Activated B cell treated with CpG ODN at 0.5 μM for 24 hours (primary cell): ENCODE measurements at regions of chr5 and their contacts with region 1.

Region 1: DNA sequence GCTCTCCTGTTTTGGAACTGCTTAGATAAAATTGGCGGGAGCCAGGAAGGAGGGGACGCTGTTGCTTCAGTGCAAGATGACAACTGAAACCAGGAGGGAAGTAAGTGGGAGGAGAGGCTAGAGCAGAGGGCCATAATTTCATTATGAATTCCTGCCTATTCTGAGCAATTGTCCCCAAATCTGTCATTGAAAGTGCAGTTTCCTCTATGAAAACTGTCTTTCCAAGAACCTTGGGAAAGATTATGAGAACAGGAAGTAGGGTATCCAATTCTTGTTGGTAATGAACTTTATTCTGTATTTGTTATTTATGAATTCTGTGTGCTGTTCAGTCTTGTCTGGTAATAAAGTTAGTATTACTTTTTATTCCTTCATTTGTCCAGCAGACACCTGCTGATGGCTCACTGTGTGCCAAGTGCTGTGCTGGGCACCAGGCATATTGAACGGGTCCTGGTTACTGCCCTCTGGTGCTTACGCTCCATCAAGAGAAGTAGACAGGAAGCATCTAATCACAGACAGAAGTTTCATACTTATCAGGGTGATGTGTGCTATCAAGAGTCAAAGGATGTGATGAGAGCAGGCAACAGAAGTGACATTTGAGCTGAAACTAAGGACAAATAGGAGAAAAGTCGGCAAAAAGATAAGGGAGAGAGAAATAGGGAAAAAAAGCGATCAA is 153.2 kb downstream of the FGF1 start:
- DNase-seq: no peak
- ATAC-seq: no peak
- H3K4me3 Mint-ChIP-seq: no peak overlapping the region
- H3K27ac Mint-ChIP-seq: no peak overlapping the region
- H3K4me1 Mint-ChIP-seq: peaks cover 6% of the 10 kb centered on the region
- H3K27me3 Mint-ChIP-seq: peaks cover 3% of the 10 kb centered on the region
- CTCF ChIP-seq: no peak

Region 2: DNA sequence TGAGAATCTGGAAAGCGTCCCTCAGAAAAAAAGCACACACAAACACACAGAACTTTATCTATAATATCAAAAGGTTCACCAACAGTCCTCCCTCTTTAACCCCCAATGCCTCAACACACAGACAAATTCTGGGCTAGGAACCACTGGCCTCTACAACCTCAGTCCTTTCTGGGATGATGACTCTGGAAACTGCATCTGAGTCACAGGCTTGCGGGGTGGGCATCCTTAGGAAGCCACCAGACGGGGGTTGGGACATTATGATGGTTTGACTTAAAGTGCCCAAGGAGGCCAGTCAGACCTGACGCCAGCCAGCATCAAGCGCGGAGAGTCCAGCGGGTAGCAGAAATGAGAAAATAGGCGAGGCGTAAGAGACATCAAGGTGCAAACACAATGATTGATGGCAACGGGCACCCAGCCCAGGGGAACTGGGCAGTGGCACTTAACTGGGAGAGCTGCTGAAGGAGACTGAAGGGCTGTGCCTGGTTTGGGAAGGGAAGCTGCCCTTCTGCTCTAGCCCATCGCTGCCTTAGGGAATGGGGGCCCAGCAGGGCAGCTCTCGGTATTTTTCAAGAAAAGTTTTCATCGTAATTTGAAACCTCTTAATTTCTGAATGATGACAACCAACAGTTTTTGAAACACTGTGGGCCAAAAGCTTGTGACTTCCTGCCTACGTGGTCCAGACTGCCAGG is 228.5 kb before region 1 on chr5:
- CTCF ChIA-PET with region 1: no interaction called
- POLR2A ChIA-PET with region 1: interaction called, 14 read pairs
- intact Hi-C with region 1: no loop called
- DNase-seq: no peak
- ATAC-seq: no peak
- H3K4me3 Mint-ChIP-seq: no peak overlapping the region
- H3K27ac Mint-ChIP-seq: no peak overlapping the region
- H3K4me1 Mint-ChIP-seq: no peaks in the 10 kb centered on the region
- H3K27me3 Mint-ChIP-seq: peaks cover 3% of the 10 kb centered on the region
- CTCF ChIP-seq: no peak

Region 3: GRCh38 chr5:142520886-142521285 is 11.8 kb before region 1 on chr5:
- CTCF ChIA-PET with region 1: no interaction called
- POLR2A ChIA-PET with region 1: no interaction called
- intact Hi-C with region 1: no loop called
- DNase-seq: no peak
- ATAC-seq: no peak
- H3K4me3 Mint-ChIP-seq: no peak overlapping the region
- H3K27ac Mint-ChIP-seq: no peak overlapping the region
- H3K4me1 Mint-ChIP-seq: no peaks in the 10 kb centered on the region
- H3K27me3 Mint-ChIP-seq: peaks cover 11% of the 10 kb centered on the region
- CTCF ChIP-seq: no peak